Pancreas (tissue), 10 donors: ENCODE measurements at regions of chr10 and their contacts with region 1.

Region 1: GRCh38 chr10:17737027-17737965 is 14.7 kb upstream of the TMEM236 start:
- DNase-seq: peak in 3 of 6 donors; percentile 39 to 64 (median 50)
- ATAC-seq: peak in 1 of 4 donors; percentile 38
- H3K4me3 ChIP-seq: no peak overlapping the region
- H3K27ac ChIP-seq: no peak overlapping the region
- H3K4me1 ChIP-seq: peaks cover 7 to 37% (median 15%) of the 10 kb centered on the region in 3 donors
- H3K27me3 ChIP-seq: no peaks in the 10 kb centered on the region
- CTCF ChIP-seq: peak in 3 of 4 donors; percentile 9 to 55 (median 40)

Region 2: DNA sequence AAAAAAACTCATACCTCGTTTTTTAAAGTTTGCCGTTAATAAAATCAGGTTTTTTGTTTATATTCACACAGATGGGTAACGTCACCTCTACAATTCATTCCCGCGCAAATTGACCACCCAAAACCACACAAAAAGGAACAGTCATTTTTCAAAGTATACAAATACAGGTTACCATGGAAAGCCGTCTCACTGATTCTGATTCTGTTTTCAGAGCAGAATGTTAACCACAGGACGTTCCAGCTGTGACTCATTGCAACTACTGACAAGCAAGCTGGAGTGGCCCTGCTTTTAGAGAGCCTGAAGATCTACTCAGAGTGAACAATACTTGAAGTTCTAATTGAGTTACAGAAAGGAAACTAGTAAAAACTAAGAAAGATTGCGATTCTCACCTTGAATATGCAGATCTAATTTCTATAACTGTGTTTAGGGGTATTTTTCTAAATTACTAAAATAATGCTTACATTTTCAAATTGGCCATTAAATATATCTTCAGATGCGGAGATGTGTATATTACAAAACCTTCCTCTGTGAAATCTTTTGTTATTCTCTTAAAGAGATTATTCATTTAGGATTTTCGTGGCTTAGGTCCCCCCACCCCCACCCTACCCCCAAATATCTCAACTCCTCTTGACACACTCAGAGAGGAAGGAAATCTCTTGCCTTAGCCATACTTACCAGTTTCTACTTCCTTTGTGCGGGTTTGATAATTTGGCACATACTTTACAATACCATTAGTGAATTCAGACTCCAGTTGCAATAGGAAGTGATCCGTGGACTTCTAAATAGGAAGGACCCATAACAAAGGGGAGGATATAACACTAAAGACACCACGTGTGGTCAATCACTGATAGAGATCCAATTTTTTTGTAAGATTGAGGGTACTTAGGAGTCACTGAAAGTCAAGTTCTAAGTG is 713.7 kb before region 1 on chr10:
- intact Hi-C with region 1: no loop called
- DNase-seq: peak in 1 of 6 donors; percentile 52
- ATAC-seq: peak in 3 of 4 donors; percentile 73 to 87 (median 82)
- H3K4me3 ChIP-seq: no peak overlapping the region
- H3K27ac ChIP-seq: peak overlapping the region in 2 of 4 donors; percentile 28 to 39
- H3K4me1 ChIP-seq: peaks cover 0 to under 1% (median 0%) of the 10 kb centered on the region in 3 donors
- H3K27me3 ChIP-seq: no peaks in the 10 kb centered on the region
- CTCF ChIP-seq: no peak

Region 3: DNA sequence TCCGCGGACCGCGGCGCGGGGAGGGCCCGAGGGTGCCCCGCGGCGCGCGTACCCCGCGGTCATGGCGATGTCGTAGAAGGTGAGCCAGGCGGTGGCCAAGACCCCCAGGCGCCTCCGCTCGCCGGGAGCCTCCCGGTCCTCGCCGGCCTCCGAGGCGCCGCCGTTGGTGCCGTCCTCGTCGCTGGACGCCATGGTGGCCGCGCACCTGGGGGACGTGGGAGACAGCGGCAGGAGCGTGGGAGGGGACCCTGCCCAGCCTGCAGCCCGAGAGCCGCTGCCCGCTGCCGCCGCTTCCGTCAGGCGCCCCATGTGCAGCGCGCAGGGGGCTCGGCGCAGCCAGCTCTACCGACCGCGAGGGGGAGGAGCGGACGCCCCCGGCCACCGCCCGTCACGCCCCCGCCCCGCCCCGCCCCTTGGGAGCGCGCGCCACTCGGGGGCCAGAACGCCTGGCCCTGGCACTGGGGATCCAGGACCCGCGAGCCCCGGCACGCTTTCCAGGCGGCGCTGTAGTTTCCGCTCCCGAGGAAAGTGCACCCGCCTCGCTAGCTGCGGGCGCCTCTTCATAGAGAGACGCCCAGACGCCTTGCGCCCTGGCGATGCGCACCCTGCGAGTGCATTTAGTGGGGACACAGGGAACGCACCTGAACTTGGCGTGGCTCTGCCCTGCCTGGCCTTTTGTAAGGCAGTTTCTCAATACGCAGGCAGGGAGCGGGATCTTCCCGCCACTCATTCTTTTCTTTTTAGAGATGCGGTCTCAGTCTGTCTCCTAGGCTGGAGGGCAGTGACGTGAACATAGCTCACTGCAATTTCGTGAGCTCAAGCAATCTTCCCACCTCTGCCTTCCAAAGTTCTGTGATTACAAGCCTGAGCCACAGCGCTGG is 120.0 kb before region 1 on chr10 and contains the start of gene HACD1:
- intact Hi-C with region 1: loop called in 1 of 3 experiments (anchors 10 kb)
- DNase-seq: peak; percentile 43 to 86 (median 67)
- ATAC-seq: peak; percentile 74 to 90 (median 86)
- H3K4me3 ChIP-seq: peak within 1 kb of the TSS; percentile 62 to 93 (median 78)
- H3K27ac ChIP-seq: peak within 1 kb of the TSS; percentile 51 to 88 (median 72)
- H3K4me1 ChIP-seq: peaks cover 0 to 4% (median 0%) of the 10 kb centered on the region in 3 donors
- H3K27me3 ChIP-seq: no peaks in the 10 kb centered on the region
- CTCF ChIP-seq: no peak
- total RNA-seq, gene HACD1: 0.46 to 8.2 (median 2.8) TPM